Activated naive CD4-positive, alpha-beta T cell treated with anti-CD3 and anti-CD28 coated beads for 36 hours (primary cell): ENCODE measurements at regions of chr12 and their contacts with region 1.

Region 1: DNA sequence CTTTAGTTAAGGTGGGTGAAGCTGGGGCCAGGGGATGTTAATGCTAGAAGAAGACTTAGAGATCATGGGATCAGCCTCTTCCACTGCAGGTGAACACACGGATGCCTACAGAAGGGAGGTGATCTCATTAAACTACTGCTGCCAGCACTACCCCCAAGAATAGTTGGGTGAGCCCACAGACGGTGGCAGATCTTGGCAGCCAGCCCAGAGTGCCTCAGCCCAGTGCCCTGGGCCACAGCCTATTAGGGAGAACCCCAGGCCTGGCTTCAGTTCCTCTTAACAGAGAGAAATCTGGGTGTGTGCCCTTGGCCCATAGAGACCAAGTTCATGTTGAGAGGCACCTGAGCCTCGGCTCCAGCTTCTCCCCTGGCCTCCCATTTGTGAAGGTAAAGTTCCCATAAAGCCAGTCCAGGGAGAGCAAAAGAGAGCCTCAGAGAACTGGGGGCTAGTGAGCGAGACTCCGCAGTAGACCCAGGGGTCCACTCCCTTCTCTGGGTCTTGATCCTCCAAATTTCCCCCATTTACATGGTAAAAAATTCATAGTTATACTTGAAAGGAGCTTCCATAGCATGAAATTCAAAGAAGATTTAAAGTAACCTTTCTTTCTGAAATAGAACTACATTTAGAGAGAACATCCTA is 125.0 kb upstream of the CCND2 start:
- DNase-seq: peak; percentile 82
- H3K4me3 Mint-ChIP-seq: no peak overlapping the region
- H3K27ac Mint-ChIP-seq: peak overlapping the region; percentile 92
- H3K4me1 Mint-ChIP-seq: peaks cover 89% of the 10 kb centered on the region
- H3K27me3 Mint-ChIP-seq: no peaks in the 10 kb centered on the region

Region 2: DNA sequence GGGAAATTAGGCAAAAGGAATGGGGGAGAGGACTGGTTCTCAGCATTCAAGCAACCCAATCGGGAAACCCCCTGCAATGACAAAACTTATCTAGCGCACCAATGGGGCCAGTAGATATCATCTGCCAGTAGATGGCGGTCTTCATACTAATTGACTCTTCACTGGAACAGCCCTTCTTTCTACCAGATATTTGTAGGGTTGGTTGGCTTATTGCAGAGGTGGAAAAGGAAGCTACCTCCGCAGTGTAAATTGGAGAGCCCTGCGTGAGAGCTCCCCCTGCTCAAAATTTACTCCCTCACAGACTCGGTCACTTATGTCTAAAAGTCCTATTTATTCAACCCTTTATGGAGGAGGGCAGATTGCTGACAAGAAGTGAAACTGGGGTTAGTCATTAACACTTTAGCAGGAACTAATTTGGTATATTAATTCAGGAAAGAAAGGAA is 41.1 kb before region 1 on chr12:
- CTCF ChIA-PET with region 1: interaction called, 44 read pairs
- intact Hi-C with region 1: loop called (anchors 1 kb)
- DNase-seq: peak; percentile 87
- H3K4me3 Mint-ChIP-seq: peak overlapping the region; percentile 48
- H3K27ac Mint-ChIP-seq: peak overlapping the region; percentile 89
- H3K4me1 Mint-ChIP-seq: peaks cover 37% of the 10 kb centered on the region
- H3K27me3 Mint-ChIP-seq: peaks cover 3% of the 10 kb centered on the region

Region 3: DNA sequence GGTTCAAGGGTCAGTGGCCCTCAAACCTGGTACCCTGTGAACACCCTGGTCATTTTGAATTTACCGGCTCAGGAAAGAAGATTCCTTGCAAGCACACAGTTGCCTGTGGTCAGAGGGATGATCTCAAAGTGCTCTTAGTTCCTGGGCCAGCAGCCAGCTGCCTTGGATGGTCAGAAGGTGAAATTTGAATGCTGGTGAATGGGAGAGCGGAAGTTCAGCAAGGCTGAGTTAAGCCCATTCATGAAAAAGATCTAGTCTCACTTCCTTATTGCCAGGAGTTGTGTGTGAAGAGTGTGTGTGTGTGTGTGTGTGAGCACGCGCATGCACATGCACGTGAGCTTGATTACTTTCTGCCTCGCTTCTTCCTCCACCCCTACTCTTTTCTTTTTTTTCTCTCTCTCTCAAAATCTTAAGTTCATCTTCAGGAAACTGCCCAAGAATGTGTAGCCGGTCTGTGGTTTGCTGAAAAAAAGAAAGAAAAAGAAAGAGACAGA is 30.5 kb before region 1 on chr12:
- CTCF ChIA-PET with region 1: interaction called, 13 read pairs
- intact Hi-C with region 1: loop called (anchors 1 kb)
- DNase-seq: no peak
- H3K4me3 Mint-ChIP-seq: peak overlapping the region; percentile 58
- H3K27ac Mint-ChIP-seq: peak overlapping the region; percentile 96
- H3K4me1 Mint-ChIP-seq: peaks cover 61% of the 10 kb centered on the region
- H3K27me3 Mint-ChIP-seq: no peaks in the 10 kb centered on the region

Region 4: GRCh38 chr12:4164559-4165558 is 16.3 kb after region 1 on chr12:
- CTCF ChIA-PET with region 1: interaction called, 29 read pairs
- intact Hi-C with region 1: loop called (anchors 1 kb)
- DNase-seq: peak; percentile 81
- H3K4me3 Mint-ChIP-seq: peak overlapping the region; percentile 85
- H3K27ac Mint-ChIP-seq: peak overlapping the region; percentile 94
- H3K4me1 Mint-ChIP-seq: peaks cover 53% of the 10 kb centered on the region
- H3K27me3 Mint-ChIP-seq: no peaks in the 10 kb centered on the region

Region 5: DNA sequence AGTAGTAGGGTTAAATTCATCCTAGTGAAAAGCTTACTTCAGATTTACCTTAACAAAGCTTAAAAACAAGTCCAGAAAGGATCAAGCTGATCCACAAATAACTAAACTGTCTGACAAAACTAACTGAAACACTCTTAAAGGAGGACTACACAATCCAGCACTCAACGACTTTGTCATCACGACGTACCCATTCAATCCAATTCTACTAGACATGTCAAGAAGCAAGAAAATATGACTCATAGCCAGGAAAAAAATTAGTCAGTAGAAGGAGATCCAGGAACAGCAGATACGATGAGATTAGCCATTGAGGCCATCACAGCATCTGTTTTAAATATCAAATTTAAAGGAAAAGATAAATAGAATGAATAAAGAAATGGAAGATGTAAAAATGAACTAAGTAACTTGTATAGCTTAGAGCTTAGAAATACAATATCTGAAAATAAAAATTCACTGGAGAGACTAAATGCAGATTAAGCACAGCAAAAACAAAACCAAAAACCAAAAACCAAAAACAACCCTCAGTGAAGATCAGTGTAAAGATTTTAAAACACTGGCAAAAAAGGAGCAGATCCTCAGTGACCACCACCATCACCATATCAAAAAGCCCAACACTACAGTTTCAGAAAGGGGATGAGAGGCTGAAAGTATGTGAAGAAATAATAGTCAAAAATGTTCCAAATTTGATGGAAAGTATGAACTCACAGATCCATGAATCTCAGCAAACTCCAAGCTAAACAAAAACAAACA is 30.1 kb after region 1 on chr12:
- CTCF ChIA-PET with region 1: interaction called, 8 read pairs
- intact Hi-C with region 1: loop called (anchors 1 kb)
- DNase-seq: peak; percentile 64
- H3K4me3 Mint-ChIP-seq: peak overlapping the region; percentile 14
- H3K27ac Mint-ChIP-seq: peak overlapping the region; percentile 87
- H3K4me1 Mint-ChIP-seq: peaks cover 21% of the 10 kb centered on the region
- H3K27me3 Mint-ChIP-seq: no peaks in the 10 kb centered on the region